Breast epithelium (tissue), 4 donors: ENCODE measurements at regions of chr13 and their contacts with region 1.

Region 1: DNA sequence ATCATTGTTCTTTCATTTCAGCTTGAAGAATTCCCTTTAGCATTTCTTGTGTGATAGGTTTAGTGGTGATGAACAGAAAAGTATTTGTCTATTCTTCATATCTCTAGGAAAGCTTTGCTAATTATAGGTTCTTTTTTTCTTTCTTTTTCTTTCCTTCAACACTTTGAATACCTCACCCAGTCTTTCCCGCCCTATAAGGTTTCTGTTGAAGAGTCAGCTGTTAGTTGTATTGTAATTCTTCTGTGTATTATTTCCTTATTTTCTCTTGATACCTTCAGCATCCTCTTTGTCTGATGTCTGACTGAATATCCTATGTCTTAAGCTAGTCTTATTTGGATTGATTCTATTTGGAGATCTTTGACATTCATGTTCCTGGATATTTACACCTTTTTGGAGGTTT is 1989.4 kb downstream of the PCDH9 start:
- DNase-seq: no peak
- H3K4me3 ChIP-seq: no peak overlapping the region
- H3K27ac ChIP-seq: no peak overlapping the region
- H3K4me1 ChIP-seq: no peaks in the 10 kb centered on the region
- H3K27me3 ChIP-seq: no peaks in the 10 kb centered on the region
- CTCF ChIP-seq: no peak
- POLR2A ChIP-seq: no peak

Region 2: GRCh38 chr13:65943024-65943423 is 702.3 kb after region 1 on chr13:
- intact Hi-C with region 1: no loop called
- DNase-seq: no peak
- H3K4me3 ChIP-seq: no peak overlapping the region
- H3K27ac ChIP-seq: no peak overlapping the region
- H3K4me1 ChIP-seq: no peaks in the 10 kb centered on the region
- H3K27me3 ChIP-seq: no peaks in the 10 kb centered on the region
- CTCF ChIP-seq: no peak
- POLR2A ChIP-seq: no peak

Region 3: GRCh38 chr13:66477816-66478215 is 1237.0 kb after region 1 on chr13:
- intact Hi-C with region 1: loop called (anchors 5 kb)
- DNase-seq: no peak
- H3K4me3 ChIP-seq: no peak overlapping the region
- H3K27ac ChIP-seq: no peak overlapping the region
- H3K4me1 ChIP-seq: no peaks in the 10 kb centered on the region
- H3K27me3 ChIP-seq: no peaks in the 10 kb centered on the region
- CTCF ChIP-seq: no peak
- POLR2A ChIP-seq: no peak